ENCODE measurements at regions of chr6 and their contacts with region 1.

Region 1: GRCh38 chr6:148464319-148465010 is 121.8 kb downstream of the SASH1 start:
- DNase-seq: no peak
- ATAC-seq: peak; percentile 75 to 83
- H3K4me3 ChIP-seq: no peak overlapping the region
- H3K27ac ChIP-seq: no peak overlapping the region
- H3K4me1 ChIP-seq: peaks cover 53% of the 10 kb centered on the region
- H3K27me3 ChIP-seq: no peaks in the 10 kb centered on the region
- CTCF ChIP-seq: peak; percentile 95

Region 2: DNA sequence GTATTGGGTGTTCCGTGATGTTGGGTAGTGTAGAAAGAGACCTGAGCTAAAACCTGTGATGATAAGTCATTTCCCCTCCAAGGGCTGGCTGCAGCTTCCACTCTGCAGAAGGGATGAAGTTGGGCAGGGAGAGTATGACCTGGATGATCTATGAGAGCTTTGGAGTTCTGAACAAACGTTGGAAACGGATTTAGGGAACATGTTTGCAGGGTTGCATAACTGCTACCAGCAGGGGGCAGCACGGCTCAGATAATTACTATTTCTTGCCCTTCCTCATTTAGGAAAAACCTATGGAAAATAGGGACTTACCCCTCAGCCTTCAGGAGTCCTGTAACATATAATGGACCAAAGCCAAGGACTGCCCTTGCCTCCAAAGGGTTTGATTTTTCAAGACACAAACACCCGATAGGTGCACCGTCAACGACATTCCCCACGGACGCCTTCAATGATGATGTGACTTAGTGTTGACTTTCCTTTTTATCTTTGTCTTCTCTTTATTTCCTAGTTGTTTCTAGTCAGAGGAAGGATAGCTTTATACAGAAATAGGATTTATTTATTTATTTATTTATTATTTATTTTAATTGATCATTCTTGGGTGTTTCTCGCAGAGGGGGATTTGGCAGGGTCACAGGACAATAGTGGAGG is 286.8 kb before region 1 on chr6:
- intact Hi-C with region 1: loop called (anchors 5 kb)
- DNase-seq: peak; percentile 75
- ATAC-seq: peak; percentile 69 to 77
- H3K4me3 ChIP-seq: no peak overlapping the region
- H3K27ac ChIP-seq: no peak overlapping the region
- H3K4me1 ChIP-seq: no peaks in the 10 kb centered on the region
- H3K27me3 ChIP-seq: no peaks in the 10 kb centered on the region
- CTCF ChIP-seq: peak; percentile 85

Measured in lower lobe of right lung (tissue), 2 donors.